Activated CD4-positive, alpha-beta T cell treated with anti-CD3 and anti-CD28 coated beads for 36 hours (primary cell): ENCODE measurements at regions of chrX and their contacts with region 1.

Region 1: DNA sequence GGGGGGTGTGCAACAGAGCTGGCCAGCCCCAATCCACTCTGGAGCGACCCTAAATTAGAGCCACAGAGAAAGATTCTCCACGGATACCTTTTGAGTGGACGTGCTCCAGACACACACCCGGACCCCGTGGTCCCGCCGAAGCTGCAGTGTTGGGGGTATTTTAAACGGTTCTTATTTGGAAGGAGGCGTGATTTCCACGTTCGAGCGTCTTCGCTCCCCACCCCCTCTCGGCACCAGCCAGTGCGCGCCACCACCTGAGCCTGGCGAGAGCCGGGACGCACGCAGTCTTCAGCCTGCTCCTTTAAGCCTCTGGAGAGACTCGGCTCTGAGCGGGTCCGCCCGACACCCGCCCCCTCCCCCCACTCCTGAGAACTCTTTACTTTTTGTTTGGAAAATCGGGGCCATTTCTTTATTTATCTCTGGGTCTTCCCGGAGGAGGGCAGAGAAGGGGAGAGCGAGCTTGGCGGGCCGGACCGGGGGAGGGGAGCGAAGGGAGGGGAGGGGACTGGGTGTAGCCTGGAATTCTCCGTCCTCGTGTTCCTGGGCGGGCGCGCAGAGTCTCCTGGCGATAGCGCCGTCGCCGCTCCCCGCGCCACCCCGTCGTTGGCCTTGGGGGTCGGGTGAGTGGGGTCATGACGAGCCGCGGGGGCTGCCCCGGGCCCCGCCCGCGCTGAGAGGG is 668 bp upstream of the PTCHD1 start:
- DNase-seq: peak; percentile 9
- ATAC-seq: no peak
- H3K4me3 Mint-ChIP-seq: no peak overlapping the region
- H3K27ac Mint-ChIP-seq: no peak overlapping the region
- H3K4me1 Mint-ChIP-seq: peaks cover 11% of the 10 kb centered on the region
- H3K27me3 Mint-ChIP-seq: peaks cover 35% of the 10 kb centered on the region

Region 2: GRCh38 chrX:25004485-25005032 is 1670.6 kb after region 1 on chrX:
- CTCF ChIA-PET with region 1: no interaction called
- POLR2A ChIA-PET with region 1: no interaction called
- intact Hi-C with region 1: loop called in 1 of 2 experiments (anchors 10 kb)
- DNase-seq: no peak
- ATAC-seq: no peak
- H3K4me3 Mint-ChIP-seq: peak overlapping the region; percentile 18
- H3K27ac Mint-ChIP-seq: no peak overlapping the region
- H3K4me1 Mint-ChIP-seq: peaks cover 5% of the 10 kb centered on the region
- H3K27me3 Mint-ChIP-seq: peaks cover 43% of the 10 kb centered on the region